Activated CD4-positive, alpha-beta T cell treated with anti-CD3 and anti-CD28 coated beads for 36 hours (primary cell): ENCODE measurements at regions of chr1 and their contacts with region 1.

Region 1: DNA sequence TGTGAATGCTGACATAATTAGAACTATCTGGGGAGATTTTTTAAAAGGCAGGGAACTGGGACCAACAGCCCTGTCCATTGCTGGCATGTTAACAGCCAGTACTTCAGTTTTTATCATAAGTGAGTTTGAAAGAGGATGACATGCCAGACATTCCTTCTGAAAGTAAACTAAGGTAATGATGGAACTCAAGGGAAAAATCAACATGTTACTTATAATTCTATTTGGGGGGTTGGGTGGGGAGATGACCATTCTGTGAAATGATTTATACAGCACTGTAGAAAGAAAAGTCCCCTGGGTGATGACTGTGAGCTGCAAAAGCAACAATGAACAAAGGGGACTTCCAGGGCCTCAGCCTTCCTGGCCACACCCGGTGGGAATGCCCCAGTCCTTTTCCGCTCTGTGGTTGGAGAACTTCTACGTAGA is 5.4 kb upstream of the LAMC2 start:
- DNase-seq: peak; percentile 68
- ATAC-seq: peak; percentile 91
- H3K4me3 Mint-ChIP-seq: no peak overlapping the region
- H3K27ac Mint-ChIP-seq: peak overlapping the region; percentile 67
- H3K4me1 Mint-ChIP-seq: peaks cover 11% of the 10 kb centered on the region
- H3K27me3 Mint-ChIP-seq: peaks cover 7% of the 10 kb centered on the region

Region 2: DNA sequence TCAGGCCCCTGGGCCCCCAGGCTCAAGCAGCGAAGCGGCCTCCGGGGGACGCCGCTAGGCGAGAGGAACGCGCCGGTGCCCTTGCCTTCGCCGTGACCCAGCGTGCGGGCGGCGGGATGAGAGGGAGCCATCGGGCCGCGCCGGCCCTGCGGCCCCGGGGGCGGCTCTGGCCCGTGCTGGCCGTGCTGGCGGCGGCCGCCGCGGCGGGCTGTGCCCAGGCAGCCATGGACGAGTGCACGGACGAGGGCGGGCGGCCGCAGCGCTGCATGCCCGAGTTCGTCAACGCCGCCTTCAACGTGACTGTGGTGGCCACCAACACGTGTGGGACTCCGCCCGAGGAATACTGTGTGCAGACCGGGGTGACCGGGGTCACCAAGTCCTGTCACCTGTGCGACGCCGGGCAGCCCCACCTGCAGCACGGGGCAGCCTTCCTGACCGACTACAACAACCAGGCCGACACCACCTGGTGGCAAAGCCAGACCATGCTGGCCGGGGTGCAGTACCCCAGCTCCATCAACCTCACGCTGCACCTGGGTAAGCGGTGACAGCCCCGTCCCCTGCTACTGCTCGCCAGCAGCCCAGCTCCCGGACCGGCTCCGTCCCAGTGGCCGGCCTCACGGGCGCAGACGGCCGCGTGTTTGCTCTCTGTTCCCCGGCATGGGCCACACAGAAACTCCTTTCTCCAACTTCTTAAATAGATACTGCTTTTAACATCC is 156.9 kb before region 1 on chr1:
- CTCF ChIA-PET with region 1: no interaction called
- POLR2A ChIA-PET with region 1: no interaction called
- intact Hi-C with region 1: loop called in 1 of 2 experiments (anchors 10 kb)
- DNase-seq: peak; percentile 70
- ATAC-seq: peak; percentile 74
- H3K4me3 Mint-ChIP-seq: peak overlapping the region; percentile 58
- H3K27ac Mint-ChIP-seq: no peak overlapping the region
- H3K4me1 Mint-ChIP-seq: peaks cover 10% of the 10 kb centered on the region
- H3K27me3 Mint-ChIP-seq: peaks cover 54% of the 10 kb centered on the region